CD14-positive monocyte (primary cell): ENCODE measurements at regions of chr2 and their contacts with region 1.

Region 1: GRCh38 chr2:237421542-237422116 is 7.7 kb upstream of the COL6A3 start:
- DNase-seq: peak; percentile 23 to 44 (median 33)
- H3K4me3 ChIP-seq: no peak overlapping the region
- H3K4me3 Mint-ChIP-seq: peak overlapping the region in 1 of 2 donors; percentile 50
- H3K27ac ChIP-seq: no peak overlapping the region
- H3K27ac Mint-ChIP-seq: no peak overlapping the region
- H3K4me1 ChIP-seq: peaks cover 0 to 6% of the 10 kb centered on the region in 2 donors
- H3K4me1 Mint-ChIP-seq: peaks cover 5% of the 10 kb centered on the region
- H3K27me3 ChIP-seq: peaks cover 0 to 3% of the 10 kb centered on the region in 2 donors
- H3K27me3 Mint-ChIP-seq: peaks cover 9 to 26% (median 15%) of the 10 kb centered on the region in 3 donors
- CTCF ChIP-seq: peak; percentile 79

Region 2: GRCh38 chr2:237474931-237475703 is 53.5 kb after region 1 on chr2:
- intact Hi-C with region 1: loop called (anchors 5 kb)
- DNase-seq: peak; percentile 47 to 56 (median 50)
- H3K4me3 ChIP-seq: peak overlapping the region; percentile 39 to 86 (median 50)
- H3K4me3 Mint-ChIP-seq: peak overlapping the region; percentile 83 to 90
- H3K27ac ChIP-seq: peak overlapping the region in 1 of 2 donors; percentile 73
- H3K27ac Mint-ChIP-seq: peak overlapping the region in 6 of 7 donors; percentile 45 to 85 (median 82)
- H3K4me1 ChIP-seq: peaks cover 18 to 20% of the 10 kb centered on the region in 2 donors
- H3K4me1 Mint-ChIP-seq: peaks cover 22% of the 10 kb centered on the region
- H3K27me3 ChIP-seq: peaks cover 11 to 27% of the 10 kb centered on the region in 2 donors
- H3K27me3 Mint-ChIP-seq: peaks cover 17 to 24% (median 20%) of the 10 kb centered on the region in 3 donors
- CTCF ChIP-seq: peak; percentile 98

Region 3: GRCh38 chr2:237572021-237572741 is 150.6 kb after region 1 on chr2:
- intact Hi-C with region 1: loop called in 1 of 2 experiments (anchors 5 kb)
- DNase-seq: peak; percentile 77 to 84 (median 79)
- H3K4me3 ChIP-seq: no peak overlapping the region
- H3K4me3 Mint-ChIP-seq: no peak overlapping the region
- H3K27ac ChIP-seq: no peak overlapping the region
- H3K27ac Mint-ChIP-seq: no peak overlapping the region
- H3K4me1 ChIP-seq: no peaks in the 10 kb centered on the region
- H3K4me1 Mint-ChIP-seq: peaks cover 6% of the 10 kb centered on the region
- H3K27me3 ChIP-seq: no peaks in the 10 kb centered on the region
- H3K27me3 Mint-ChIP-seq: peaks cover 0 to 9% (median 1%) of the 10 kb centered on the region in 3 donors
- CTCF ChIP-seq: peak; percentile 98

Region 4: GRCh38 chr2:239049421-239050251 is 1628.0 kb after region 1 on chr2:
- intact Hi-C with region 1: no loop called
- DNase-seq: no peak
- H3K4me3 ChIP-seq: no peak overlapping the region
- H3K4me3 Mint-ChIP-seq: no peak overlapping the region
- H3K27ac ChIP-seq: no peak overlapping the region
- H3K27ac Mint-ChIP-seq: no peak overlapping the region
- H3K4me1 ChIP-seq: no peaks in the 10 kb centered on the region
- H3K4me1 Mint-ChIP-seq: no peaks in the 10 kb centered on the region
- H3K27me3 ChIP-seq: no peaks in the 10 kb centered on the region
- H3K27me3 Mint-ChIP-seq: peaks cover 0 to 1% (median 0%) of the 10 kb centered on the region in 3 donors
- CTCF ChIP-seq: no peak